Activated CD4-positive, alpha-beta memory T cell treated with anti-CD3 and anti-CD28 coated beads for 36 hours (primary cell): ENCODE measurements at regions of chr7 and their contacts with region 1.

Region 1: DNA sequence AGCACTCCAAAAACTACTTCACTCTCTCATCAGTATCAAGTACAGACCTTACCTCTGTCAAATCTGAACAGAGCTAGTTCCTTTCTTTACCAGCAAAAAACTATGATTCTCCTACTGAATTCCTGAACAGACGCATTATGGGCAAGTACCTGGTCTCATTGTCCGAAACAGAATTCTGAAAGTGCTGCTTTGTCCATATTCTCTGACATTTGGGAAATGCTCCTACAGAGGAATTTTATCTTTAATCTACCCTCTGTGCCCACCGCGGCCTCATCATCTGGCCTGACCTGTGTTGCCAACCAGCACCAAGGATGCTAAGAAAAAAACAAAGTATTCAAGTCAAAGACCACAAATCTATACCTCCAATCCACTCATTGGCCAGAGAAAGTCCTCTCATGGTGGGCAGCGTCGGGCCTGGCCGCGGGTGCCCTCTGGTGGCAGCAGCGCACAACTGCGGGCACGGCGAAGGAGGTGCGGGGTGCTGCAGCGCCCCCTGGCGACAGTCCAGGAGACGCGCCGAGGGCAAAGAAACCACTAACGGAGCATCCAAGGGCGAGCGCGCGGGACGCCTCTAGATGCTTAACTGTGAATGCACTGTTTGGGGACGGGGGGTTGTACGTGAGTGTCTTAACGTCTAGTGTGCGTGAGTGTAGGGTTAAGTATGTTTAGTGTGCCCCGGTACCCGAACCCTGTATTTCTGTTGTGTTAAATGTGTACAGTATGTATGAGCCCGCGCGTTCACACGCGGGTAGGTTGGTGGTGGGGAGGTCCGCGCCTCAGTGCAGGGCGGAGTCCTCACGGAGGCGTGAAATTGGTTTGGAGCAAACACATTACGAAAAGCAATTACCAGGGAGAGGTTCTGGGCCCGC is 5.0 kb upstream of the GBX1 start:
- DNase-seq: peak; percentile 85
- H3K4me3 Mint-ChIP-seq: no peak overlapping the region
- H3K27ac Mint-ChIP-seq: no peak overlapping the region
- H3K4me1 Mint-ChIP-seq: peaks cover 9% of the 10 kb centered on the region
- H3K27me3 Mint-ChIP-seq: peaks cover 44% of the 10 kb centered on the region

Region 2: GRCh38 chr7:151123822-151124464 is 48.6 kb before region 1 on chr7:
- CTCF ChIA-PET with region 1: interaction called, 42 read pairs
- POLR2A ChIA-PET with region 1: no interaction called
- intact Hi-C with region 1: loop called (anchors 1 kb)
- DNase-seq: peak; percentile 85
- H3K4me3 Mint-ChIP-seq: no peak overlapping the region
- H3K27ac Mint-ChIP-seq: no peak overlapping the region
- H3K4me1 Mint-ChIP-seq: no peaks in the 10 kb centered on the region
- H3K27me3 Mint-ChIP-seq: no peaks in the 10 kb centered on the region

Region 3: DNA sequence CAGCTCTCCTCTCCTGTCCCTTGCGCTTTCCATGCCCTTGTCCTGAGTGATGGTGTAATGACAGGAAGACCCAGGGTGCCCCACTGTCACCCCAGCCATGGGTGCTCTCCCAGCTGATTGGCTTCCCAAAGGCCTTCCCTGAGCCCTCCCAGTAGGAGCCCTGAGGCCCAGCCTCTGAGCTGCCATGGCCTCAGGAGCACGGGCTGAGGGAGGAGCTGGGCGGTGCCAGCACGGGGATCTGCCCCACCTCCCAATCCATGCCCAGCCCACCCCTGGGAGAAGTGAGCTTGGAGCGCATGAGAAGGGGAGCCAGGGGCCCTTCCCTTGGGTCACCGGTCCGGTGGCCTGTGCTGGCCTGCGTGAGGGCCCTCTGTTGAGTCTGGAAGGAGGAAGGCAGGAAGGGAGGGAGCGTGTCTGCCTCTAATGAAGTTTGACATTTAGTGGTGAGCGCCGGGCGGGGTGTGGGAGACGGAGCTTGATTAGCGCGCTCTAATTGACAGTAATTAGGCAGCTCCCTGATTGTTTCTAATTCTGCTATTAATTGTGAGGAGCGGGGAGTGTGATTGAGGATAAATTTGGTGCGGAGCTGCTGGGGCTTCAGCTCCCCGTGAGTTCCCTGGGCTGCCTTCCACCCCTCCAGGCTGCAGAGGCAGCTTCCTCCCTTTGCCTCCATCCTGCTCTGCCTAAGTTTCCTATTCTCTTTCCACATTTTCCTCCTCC is 33.3 kb before region 1 on chr7:
- CTCF ChIA-PET with region 1: interaction called, 11 read pairs
- POLR2A ChIA-PET with region 1: no interaction called
- intact Hi-C with region 1: no loop called
- DNase-seq: no peak
- H3K4me3 Mint-ChIP-seq: no peak overlapping the region
- H3K27ac Mint-ChIP-seq: no peak overlapping the region
- H3K4me1 Mint-ChIP-seq: no peaks in the 10 kb centered on the region
- H3K27me3 Mint-ChIP-seq: no peaks in the 10 kb centered on the region

Region 4: DNA sequence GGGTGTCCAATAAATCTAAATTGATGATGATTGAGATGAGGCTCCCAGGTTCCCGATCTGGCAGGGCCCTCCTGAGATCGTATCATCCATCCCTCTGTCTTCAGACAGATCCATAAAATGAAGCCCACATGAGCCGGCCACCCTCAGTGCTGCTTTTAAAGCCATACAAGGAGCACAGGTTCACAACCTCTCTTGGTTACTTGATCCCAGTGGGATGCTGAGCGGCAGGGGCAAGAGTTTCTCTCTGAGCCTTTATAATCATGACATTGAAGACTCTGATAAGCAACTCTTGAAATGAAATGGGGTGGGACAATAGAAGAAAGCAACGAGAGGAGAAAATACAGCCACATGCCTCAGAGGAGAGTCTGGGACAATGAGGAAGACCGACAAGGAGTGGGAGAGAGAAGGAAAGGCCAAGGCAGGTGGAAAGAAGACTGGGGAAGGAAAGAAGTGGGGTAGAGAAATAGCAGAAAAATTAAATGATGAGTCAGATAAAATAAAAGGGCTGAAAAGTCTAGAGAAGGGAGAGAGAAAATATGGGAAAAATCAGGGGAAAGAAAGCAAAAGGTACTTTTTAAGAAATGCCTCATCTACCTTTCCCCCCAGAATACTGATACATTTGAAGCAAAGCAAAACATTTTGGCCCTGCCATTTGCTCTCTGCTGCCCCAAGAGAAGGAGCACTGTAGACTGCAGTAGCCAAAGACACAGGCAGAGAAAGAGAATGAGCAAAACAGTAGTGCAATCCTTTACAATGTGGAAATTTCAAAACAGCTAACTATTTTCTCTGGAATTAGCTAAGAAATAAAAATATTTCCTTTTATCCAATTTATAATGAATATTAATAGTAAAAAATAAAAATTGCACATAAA is 19.6 kb before region 1 on chr7:
- CTCF ChIA-PET with region 1: interaction called, 10 read pairs
- POLR2A ChIA-PET with region 1: no interaction called
- intact Hi-C with region 1: no loop called
- DNase-seq: no peak
- H3K4me3 Mint-ChIP-seq: no peak overlapping the region
- H3K27ac Mint-ChIP-seq: no peak overlapping the region
- H3K4me1 Mint-ChIP-seq: no peaks in the 10 kb centered on the region
- H3K27me3 Mint-ChIP-seq: peaks cover 17% of the 10 kb centered on the region

Region 5: DNA sequence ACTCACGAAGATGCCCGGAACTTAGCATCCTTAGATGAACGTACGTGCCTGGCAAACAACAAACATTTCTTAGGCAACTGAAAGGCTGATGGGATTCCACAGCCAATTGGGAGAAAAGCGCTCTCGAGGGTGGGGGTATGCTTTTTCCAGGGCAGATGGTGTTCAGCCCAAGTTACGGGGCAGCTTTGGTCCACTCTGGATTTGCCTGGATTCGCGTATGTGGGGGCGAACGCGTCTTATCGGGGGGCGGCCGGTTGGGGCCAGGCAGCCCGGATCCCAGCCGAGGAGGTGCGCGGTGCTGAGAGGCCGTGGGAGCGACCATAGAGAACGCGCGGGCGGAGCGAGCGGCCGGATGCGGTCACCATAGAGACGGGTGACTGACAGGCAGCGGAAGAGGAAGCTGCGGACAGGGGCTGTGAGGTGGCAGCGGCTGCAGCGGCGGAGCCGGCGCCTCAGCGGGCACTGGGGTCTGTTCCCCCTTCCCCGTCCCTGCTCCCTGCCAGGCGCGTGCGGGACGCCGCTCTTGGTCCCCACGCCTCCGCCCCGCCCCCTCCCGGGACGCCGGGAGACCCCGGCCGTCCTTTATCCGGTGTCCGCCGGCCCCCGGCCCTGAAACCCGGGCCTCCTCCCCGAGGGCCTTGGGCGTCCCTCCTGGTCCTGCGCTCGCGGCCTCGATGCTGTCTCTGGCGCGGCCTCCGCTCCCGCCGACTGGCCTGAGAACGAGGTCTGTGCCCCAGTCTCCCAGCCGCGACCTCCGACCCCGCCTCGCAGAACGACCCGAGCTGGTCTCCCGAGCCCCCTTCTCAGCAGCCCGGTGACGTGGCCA is 59.8 kb after region 1 on chr7 and contains the start of gene CHPF2:
- CTCF ChIA-PET with region 1: interaction called, 5 read pairs
- POLR2A ChIA-PET with region 1: no interaction called
- intact Hi-C with region 1: loop called (anchors 2 kb)
- DNase-seq: peak; percentile 95
- H3K4me3 Mint-ChIP-seq: peak within 1 kb of the TSS; percentile 100
- H3K27ac Mint-ChIP-seq: peak within 1 kb of the TSS; percentile 99
- H3K4me1 Mint-ChIP-seq: peaks cover 38% of the 10 kb centered on the region
- H3K27me3 Mint-ChIP-seq: no peaks in the 10 kb centered on the region
- total RNA-seq, gene CHPF2: 33.6 to 34.2 TPM

Region 6: GRCh38 chr7:151304856-151305255 is 132.3 kb after region 1 on chr7:
- CTCF ChIA-PET with region 1: interaction called, 4 read pairs
- POLR2A ChIA-PET with region 1: no interaction called
- intact Hi-C with region 1: loop called (anchors 2 kb)
- DNase-seq: no peak
- H3K4me3 Mint-ChIP-seq: peak overlapping the region; percentile 34
- H3K27ac Mint-ChIP-seq: no peak overlapping the region
- H3K4me1 Mint-ChIP-seq: peaks cover 9% of the 10 kb centered on the region
- H3K27me3 Mint-ChIP-seq: peaks cover 20% of the 10 kb centered on the region